HepG2 (cell line): ENCODE measurements at regions of chr20 and their contacts with region 1.

Region 1: DNA sequence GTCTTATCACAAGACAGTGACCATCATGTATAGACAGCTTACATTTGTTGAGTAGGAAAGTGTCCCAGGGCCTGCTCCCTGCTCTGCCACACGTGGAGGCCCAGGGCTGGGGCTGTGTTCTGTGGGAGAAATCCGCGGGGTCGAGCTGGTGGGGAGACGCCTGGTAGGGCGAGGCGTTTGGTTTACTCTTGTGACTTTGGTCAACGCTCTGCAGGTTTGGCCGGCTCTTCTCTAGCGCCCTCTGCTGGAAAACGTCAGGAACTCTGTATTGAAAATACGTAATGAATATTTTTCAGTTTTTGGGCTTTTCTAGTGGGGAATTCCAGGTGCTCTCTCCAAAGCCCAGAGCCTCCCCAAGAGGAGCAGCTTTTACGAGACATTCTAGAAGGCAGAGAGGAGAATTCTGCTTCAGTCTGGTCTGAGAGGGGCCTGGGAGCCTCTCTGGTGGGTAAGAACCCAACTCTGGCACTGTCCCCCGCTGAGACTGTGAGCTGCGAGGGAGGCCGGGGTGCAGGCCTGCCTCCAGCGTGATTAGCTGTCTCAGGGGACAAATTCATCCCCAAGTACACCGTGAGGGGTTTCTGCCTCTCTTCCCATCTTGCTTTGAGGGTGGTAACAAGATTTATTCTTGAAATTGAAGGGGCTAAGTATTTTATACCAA is 112.6 kb upstream of the RALGAPA2 start:
- DNase-seq: peak; percentile 70
- ATAC-seq: peak; percentile 75
- H3K4me3 ChIP-seq: 0 out of 6 replicates have a peak overlapping the region, but pooled peaks of 1 of the 3 experiments have one; percentile 19
- H3K27ac ChIP-seq: no peak overlapping the region
- H3K4me1 ChIP-seq: peaks cover 11% of the 10 kb centered on the region; the same call in 1 of the 2 replicates
- H3K27me3 ChIP-seq: peaks cover 0 to 26% of the 10 kb centered on the region in 2 experiments; a peak in 2 of 5 replicates
- CTCF ChIP-seq: peak; percentile 92
- EP300 ChIP-seq: no peak
- POLR2A ChIP-seq: no peak
- RAD21 ChIP-seq: peak; percentile 82

Region 2: DNA sequence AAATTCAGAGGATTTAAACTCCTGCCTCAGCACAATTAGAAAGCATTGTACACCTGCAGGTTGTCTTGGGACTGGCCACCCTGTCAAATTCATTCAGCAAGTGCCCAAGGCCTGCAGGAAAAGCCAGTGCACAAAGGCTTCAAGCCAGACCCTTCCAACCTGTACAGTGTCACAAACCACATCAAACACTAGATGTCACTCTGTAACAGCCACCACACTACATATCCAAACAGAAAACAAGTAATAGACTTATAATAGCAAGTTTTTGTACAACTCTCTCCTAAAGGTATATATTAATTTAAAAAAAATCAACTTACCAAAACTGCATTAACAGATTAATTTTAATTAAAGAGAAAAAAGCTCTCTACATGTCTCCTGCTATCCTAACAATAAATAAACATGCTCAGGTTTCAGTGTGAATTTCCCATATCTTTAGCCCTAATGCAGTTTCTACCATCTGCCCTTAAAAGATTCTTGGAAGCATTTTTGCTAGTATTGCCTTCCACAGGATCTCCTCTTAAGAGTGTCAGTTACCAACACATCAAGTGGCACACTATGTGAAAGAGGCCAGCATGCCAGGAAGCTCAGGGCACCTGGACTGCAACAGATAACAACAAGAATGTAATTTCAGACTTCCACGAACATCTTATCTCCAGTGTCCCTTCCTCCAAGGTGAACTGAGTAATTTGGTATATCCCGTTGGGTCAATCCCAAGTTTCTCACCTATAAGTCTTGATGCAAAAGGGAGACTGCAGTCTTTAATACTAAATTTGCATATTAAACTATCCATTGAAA is 160.1 kb before region 1 on chr20:
- CTCF ChIA-PET with region 1: interaction called, 95 read pairs
- POLR2A ChIA-PET with region 1: no interaction called
- in situ Hi-C with region 1: loop called (anchors 5 kb)
- intact Hi-C with region 1: loop called (anchors 1 kb)
- DNase-seq: peak; percentile 71
- ATAC-seq: peak; percentile 99
- H3K4me3 ChIP-seq: no peak overlapping the region
- H3K27ac ChIP-seq: no peak overlapping the region
- H3K4me1 ChIP-seq: no peaks in the 10 kb centered on the region
- H3K27me3 ChIP-seq: no peaks in the 10 kb centered on the region
- CTCF ChIP-seq: peak; percentile 89
- EP300 ChIP-seq: no peak
- POLR2A ChIP-seq: no peak
- RAD21 ChIP-seq: peak; percentile 85